Activated naive CD4-positive, alpha-beta T cell treated with anti-CD3 and anti-CD28 coated beads for 36 hours (primary cell): ENCODE measurements at regions of chr16 and their contacts with region 1.

Region 1: DNA sequence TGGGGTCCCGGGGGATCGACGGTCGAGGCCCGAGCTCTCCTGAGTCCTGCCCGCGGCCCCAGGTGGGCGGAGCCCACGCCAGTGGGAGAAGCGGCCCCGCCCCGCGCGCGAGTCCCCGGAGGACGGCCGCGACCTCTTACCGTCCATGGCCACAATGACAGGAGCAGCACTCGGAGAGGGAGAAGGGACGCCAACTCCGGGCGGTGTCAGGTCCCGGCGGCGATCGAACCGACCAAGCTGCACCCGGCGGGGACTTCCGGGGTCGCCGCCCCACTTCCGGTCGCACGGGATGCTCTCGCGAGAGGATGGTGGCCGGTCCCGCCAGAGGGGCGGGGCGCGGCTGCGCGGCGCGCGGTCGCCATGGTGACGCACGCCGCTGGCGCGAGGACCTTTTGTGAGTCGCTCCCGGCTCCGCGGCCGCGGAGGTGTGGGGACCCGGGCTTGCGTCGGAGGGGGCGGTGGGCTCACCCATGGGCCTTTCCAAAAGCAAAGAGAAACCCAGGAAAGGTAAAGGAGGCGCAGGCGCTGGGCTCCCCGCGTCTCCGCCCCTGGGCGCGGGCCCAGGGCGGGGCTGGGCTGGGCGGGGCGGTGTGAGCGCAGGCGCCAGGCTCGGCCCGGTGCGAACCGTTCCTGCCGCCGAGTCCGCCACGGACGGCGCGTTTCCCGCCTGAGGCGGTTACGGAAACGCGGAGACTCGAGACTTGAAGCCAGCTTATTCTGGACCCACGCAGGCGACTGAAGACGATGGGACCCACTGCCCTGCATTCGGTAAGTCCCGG is at the starts of genes CHMP1A and SPATA33:
- DNase-seq: peak; percentile 92
- H3K4me3 Mint-ChIP-seq: peak within 1 kb of the TSS; percentile 91
- H3K27ac Mint-ChIP-seq: peak within 1 kb of the TSS; percentile 77
- H3K4me1 Mint-ChIP-seq: peaks cover 32% of the 10 kb centered on the region
- H3K27me3 Mint-ChIP-seq: no peaks in the 10 kb centered on the region
- total RNA-seq, gene CHMP1A: 46.8 to 48.4 TPM
- total RNA-seq, gene SPATA33: 6.5 to 7.0 TPM

Region 2: GRCh38 chr16:89534252-89534756 is 123.3 kb before region 1 on chr16:
- CTCF ChIA-PET with region 1: no interaction called
- intact Hi-C with region 1: no loop called
- DNase-seq: peak; percentile 26
- H3K4me3 Mint-ChIP-seq: no peak overlapping the region
- H3K27ac Mint-ChIP-seq: peak overlapping the region; percentile 55
- H3K4me1 Mint-ChIP-seq: peaks cover 21% of the 10 kb centered on the region
- H3K27me3 Mint-ChIP-seq: no peaks in the 10 kb centered on the region

Region 3: GRCh38 chr16:89686520-89687091 is 29.0 kb after region 1 on chr16 and contains the start of gene CDK10:
- CTCF ChIA-PET with region 1: no interaction called
- intact Hi-C with region 1: loop called (anchors 2 kb)
- DNase-seq: peak; percentile 86
- H3K4me3 Mint-ChIP-seq: peak within 1 kb of the TSS; percentile 92
- H3K27ac Mint-ChIP-seq: peak within 1 kb of the TSS; percentile 89
- H3K4me1 Mint-ChIP-seq: peaks cover 15% of the 10 kb centered on the region
- H3K27me3 Mint-ChIP-seq: no peaks in the 10 kb centered on the region
- total RNA-seq, gene CDK10: 128 to 158 TPM